Activated CD4-positive, alpha-beta T cell treated with anti-CD3 and anti-CD28 coated beads, Interleukin-2, amount 10 ng/mL, durations not matched to agents 7 days and 5 days (primary cell): ENCODE measurements at regions of chr9 and their contacts with region 1.

Region 1: DNA sequence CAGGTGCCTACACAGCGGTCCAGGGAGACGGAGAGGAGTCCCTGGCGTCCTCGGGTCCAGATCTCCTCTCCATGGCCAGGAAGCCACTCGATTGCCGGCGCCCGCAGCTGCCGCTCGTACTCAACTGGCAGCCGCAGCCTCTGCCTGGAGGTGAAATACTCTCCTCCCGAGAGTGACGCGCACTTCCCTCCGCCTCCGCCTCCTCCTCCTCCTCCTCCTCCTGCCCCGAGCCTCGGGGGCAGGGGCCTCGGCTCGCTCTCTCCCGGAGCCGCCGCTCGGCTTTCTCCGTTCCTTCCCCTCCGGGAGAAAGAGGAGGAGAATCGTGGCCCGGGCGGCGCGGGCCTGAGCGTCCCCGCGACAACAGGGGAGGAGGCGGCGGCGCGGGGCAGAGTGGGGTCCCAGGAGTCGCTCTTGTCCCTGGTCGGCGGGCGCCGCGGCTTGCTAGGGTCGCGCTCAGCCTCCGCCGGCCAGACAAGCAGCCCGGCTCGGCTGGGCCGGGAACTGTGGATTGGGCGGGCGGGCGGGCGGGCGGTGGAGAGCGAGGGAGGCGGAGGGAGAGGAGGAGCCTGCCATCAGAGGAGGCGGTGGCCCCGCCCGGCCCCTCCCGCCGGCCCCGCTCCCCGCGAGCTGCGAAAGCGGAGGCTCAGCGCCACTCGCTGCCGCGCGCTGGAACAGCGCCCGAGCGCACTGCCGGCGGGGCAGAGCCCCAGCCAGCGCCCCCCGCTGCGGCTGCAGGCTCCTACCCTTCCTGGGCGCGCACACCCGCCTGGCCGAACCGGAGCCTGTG is at the start of gene CEMIP2:
- DNase-seq: peak; percentile 91
- H3K4me3 Mint-ChIP-seq: peak within 1 kb of the TSS; percentile 88
- H3K27ac Mint-ChIP-seq: peak within 1 kb of the TSS; percentile 91
- H3K4me1 Mint-ChIP-seq: peaks cover 48% of the 10 kb centered on the region
- H3K27me3 Mint-ChIP-seq: no peaks in the 10 kb centered on the region
- total RNA-seq, gene CEMIP2: 43.2 to 55.7 TPM

Region 2: DNA sequence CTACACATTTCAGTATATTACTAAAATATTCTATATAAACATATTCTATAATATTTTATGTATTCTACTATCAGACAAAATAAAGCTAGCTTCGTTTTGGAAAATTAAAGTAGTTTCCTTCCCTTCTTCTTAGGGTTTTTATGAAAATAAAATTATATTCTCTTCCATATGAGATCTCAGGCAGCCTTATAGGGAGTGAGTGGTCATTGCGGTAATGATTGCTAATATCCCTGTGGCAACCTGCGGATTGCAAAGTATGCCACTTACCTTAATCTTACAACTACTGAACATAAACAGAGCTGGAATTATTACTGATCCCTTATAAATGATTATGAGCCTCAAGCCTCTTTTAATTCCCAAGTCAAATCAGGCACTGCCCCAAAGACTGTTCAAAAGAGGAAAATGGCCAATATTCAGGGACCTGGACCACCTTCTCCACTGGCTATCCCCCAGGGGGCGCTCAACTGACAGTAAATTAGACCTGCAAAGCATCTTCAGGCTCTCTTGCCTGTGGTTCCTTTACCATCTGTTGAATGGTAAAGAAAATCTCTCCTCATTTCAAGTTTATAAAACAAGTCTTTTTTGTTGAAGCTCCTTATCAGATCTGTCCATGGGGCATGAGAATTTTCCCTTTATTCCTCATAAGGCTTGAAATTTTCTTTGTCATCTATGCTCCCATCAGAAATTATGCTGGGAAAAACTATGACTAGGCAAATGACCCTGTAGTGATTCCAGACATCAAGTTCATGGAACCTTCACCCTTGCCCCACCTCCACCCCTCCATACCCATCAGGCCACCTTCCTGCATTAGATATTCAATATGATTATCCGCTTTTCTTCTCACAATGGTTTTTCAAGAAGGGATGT is 164.2 kb before region 1 on chr9:
- CTCF ChIA-PET with region 1: interaction called, 19 read pairs
- POLR2A ChIA-PET with region 1: no interaction called
- DNase-seq: peak; percentile 88
- H3K4me3 Mint-ChIP-seq: no peak overlapping the region
- H3K27ac Mint-ChIP-seq: no peak overlapping the region
- H3K4me1 Mint-ChIP-seq: no peaks in the 10 kb centered on the region
- H3K27me3 Mint-ChIP-seq: peaks cover 2% of the 10 kb centered on the region

Region 3: GRCh38 chr9:71743217-71743705 is 25.3 kb before region 1 on chr9:
- CTCF ChIA-PET with region 1: no interaction called
- POLR2A ChIA-PET with region 1: no interaction called
- DNase-seq: no peak
- H3K4me3 Mint-ChIP-seq: no peak overlapping the region
- H3K27ac Mint-ChIP-seq: no peak overlapping the region
- H3K4me1 Mint-ChIP-seq: peaks cover 2% of the 10 kb centered on the region
- H3K27me3 Mint-ChIP-seq: no peaks in the 10 kb centered on the region

Region 4: GRCh38 chr9:72089451-72090130 is 321.0 kb after region 1 on chr9:
- CTCF ChIA-PET with region 1: no interaction called
- POLR2A ChIA-PET with region 1: no interaction called
- DNase-seq: no peak
- H3K4me3 Mint-ChIP-seq: no peak overlapping the region
- H3K27ac Mint-ChIP-seq: no peak overlapping the region
- H3K4me1 Mint-ChIP-seq: no peaks in the 10 kb centered on the region
- H3K27me3 Mint-ChIP-seq: no peaks in the 10 kb centered on the region